ENCODE measurements at regions of chr19 and their contacts with region 1.

Region 1: GRCh38 chr19:31356587-31357314 is 7.5 kb upstream of the TSHZ3 start:
- DNase-seq: peak in 13 of 14 experiments; percentile 24 to 79 (median 47)
- ATAC-seq: peak; percentile 52
- H3K4me3 ChIP-seq: no peak overlapping the region
- H3K4me3 Mint-ChIP-seq: no peak overlapping the region
- H3K27ac ChIP-seq: no peak overlapping the region
- H3K27ac Mint-ChIP-seq: no peak overlapping the region
- H3K4me1 ChIP-seq: peaks cover 46% of the 10 kb centered on the region
- H3K4me1 Mint-ChIP-seq: peaks cover 53% of the 10 kb centered on the region
- H3K27me3 ChIP-seq: peaks cover 72 to 81% of the 10 kb centered on the region in 2 experiments
- H3K27me3 Mint-ChIP-seq: peaks cover 97% of the 10 kb centered on the region
- CTCF ChIP-seq: peak; percentile 67

Region 2: GRCh38 chr19:30669329-30670010 is 687.3 kb before region 1 on chr19:
- CTCF ChIA-PET with region 1: no interaction called
- POLR2A ChIA-PET with region 1: no interaction called
- intact Hi-C with region 1: loop called in 1 of 2 experiments (anchors 5 kb)
- DNase-seq: peak; percentile 15 to 56 (median 26)
- ATAC-seq: no peak
- H3K4me3 ChIP-seq: no peak overlapping the region
- H3K4me3 Mint-ChIP-seq: no peak overlapping the region
- H3K27ac ChIP-seq: no peak overlapping the region
- H3K27ac Mint-ChIP-seq: no peak overlapping the region
- H3K4me1 ChIP-seq: peaks cover 2% of the 10 kb centered on the region
- H3K4me1 Mint-ChIP-seq: no peaks in the 10 kb centered on the region
- H3K27me3 ChIP-seq: peaks cover 22% of the 10 kb centered on the region in 2 experiments
- H3K27me3 Mint-ChIP-seq: peaks cover 55% of the 10 kb centered on the region
- CTCF ChIP-seq: peak; percentile 68

Region 3: DNA sequence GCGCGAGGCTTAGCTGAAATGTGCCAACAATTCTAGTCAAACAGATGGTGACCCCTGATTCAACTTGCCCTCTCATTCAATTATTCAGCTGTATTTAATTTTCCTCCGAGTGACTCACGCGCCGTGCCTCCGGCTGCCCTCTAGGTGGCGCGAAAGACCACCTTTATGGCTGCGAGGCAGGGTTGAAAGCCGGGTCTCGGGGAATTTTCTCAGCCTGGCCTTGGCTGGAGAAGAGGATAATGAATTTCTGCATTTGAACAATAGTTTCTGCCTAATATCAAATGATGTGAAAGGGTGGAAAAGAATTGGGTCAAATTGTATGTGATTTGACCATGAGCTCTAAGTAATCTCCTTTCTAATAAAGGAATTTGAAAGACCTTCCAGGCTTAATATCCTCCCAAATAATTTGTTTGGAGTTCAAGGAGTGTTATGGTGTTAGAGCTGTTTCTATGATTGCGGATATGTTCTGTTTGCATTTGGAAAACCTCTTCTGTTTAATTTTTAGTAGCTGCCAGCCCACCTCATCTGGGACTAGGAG is 673.7 kb before region 1 on chr19:
- CTCF ChIA-PET with region 1: no interaction called
- POLR2A ChIA-PET with region 1: no interaction called
- intact Hi-C with region 1: loop called in 1 of 2 experiments (anchors 5 kb)
- DNase-seq: peak; percentile 17 to 62 (median 30)
- ATAC-seq: peak; percentile 46
- H3K4me3 ChIP-seq: no peak overlapping the region
- H3K4me3 Mint-ChIP-seq: no peak overlapping the region
- H3K27ac ChIP-seq: no peak overlapping the region
- H3K27ac Mint-ChIP-seq: no peak overlapping the region
- H3K4me1 ChIP-seq: no peaks in the 10 kb centered on the region
- H3K4me1 Mint-ChIP-seq: no peaks in the 10 kb centered on the region
- H3K27me3 ChIP-seq: peaks cover 2 to 14% of the 10 kb centered on the region in 2 experiments
- H3K27me3 Mint-ChIP-seq: peaks cover 50% of the 10 kb centered on the region
- CTCF ChIP-seq: peak; percentile 82

Region 4: GRCh38 chr19:30784850-30785457 is 571.8 kb before region 1 on chr19:
- CTCF ChIA-PET with region 1: no interaction called
- POLR2A ChIA-PET with region 1: no interaction called
- intact Hi-C with region 1: loop called (anchors 1 to 5 kb)
- DNase-seq: peak; percentile 26 to 72 (median 48)
- ATAC-seq: no peak
- H3K4me3 ChIP-seq: no peak overlapping the region
- H3K4me3 Mint-ChIP-seq: no peak overlapping the region
- H3K27ac ChIP-seq: no peak overlapping the region
- H3K27ac Mint-ChIP-seq: no peak overlapping the region
- H3K4me1 ChIP-seq: no peaks in the 10 kb centered on the region
- H3K4me1 Mint-ChIP-seq: no peaks in the 10 kb centered on the region
- H3K27me3 ChIP-seq: no peaks in the 10 kb centered on the region
- H3K27me3 Mint-ChIP-seq: peaks cover 31% of the 10 kb centered on the region
- CTCF ChIP-seq: peak; percentile 63

Region 5: GRCh38 chr19:31054430-31054829 is 302.3 kb before region 1 on chr19:
- CTCF ChIA-PET with region 1: no interaction called
- POLR2A ChIA-PET with region 1: no interaction called
- intact Hi-C with region 1: loop called (anchors 1 to 2 kb)
- DNase-seq: peak in 12 of 14 experiments; percentile 1 to 64 (median 13)
- ATAC-seq: no peak
- H3K4me3 ChIP-seq: no peak overlapping the region
- H3K4me3 Mint-ChIP-seq: no peak overlapping the region
- H3K27ac ChIP-seq: no peak overlapping the region
- H3K27ac Mint-ChIP-seq: no peak overlapping the region
- H3K4me1 ChIP-seq: no peaks in the 10 kb centered on the region
- H3K4me1 Mint-ChIP-seq: no peaks in the 10 kb centered on the region
- H3K27me3 ChIP-seq: peaks cover 0 to 3% of the 10 kb centered on the region in 2 experiments
- H3K27me3 Mint-ChIP-seq: peaks cover 25% of the 10 kb centered on the region
- CTCF ChIP-seq: no peak